ENCODE measurements at regions of chr10 and their contacts with region 1.

Region 1: DNA sequence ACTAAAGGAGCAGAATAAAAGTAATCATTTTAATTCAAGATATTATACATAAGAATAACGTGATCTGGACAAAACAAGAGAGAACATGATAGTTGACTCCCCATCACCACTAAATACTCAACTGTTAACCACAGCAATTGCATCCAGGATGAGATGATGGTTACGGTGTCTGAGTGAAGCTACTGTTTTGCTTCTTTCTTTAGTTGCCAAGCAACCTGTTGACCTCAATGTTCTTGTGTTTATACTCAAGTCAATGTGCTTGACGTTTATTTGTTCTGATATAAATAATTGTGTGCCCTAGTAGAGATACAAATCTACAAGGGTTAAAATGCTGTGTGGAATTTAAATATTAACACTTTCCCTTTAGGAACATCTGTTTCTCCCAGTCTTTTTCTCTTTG is 31.4 kb upstream of the MPP7 start:
- DNase-seq: peak; percentile 61
- H3K4me3 Mint-ChIP-seq: peak overlapping the region; percentile 67
- H3K27ac Mint-ChIP-seq: peak overlapping the region; percentile 96
- H3K4me1 Mint-ChIP-seq: peaks cover 76% of the 10 kb centered on the region
- H3K27me3 Mint-ChIP-seq: no peaks in the 10 kb centered on the region

Region 2: GRCh38 chr10:26977635-26978034 is 1356.7 kb before region 1 on chr10:
- CTCF ChIA-PET with region 1: no interaction called
- intact Hi-C with region 1: no loop called
- DNase-seq: no peak
- H3K4me3 Mint-ChIP-seq: no peak overlapping the region
- H3K27ac Mint-ChIP-seq: no peak overlapping the region
- H3K4me1 Mint-ChIP-seq: no peaks in the 10 kb centered on the region
- H3K27me3 Mint-ChIP-seq: no peaks in the 10 kb centered on the region

Region 3: DNA sequence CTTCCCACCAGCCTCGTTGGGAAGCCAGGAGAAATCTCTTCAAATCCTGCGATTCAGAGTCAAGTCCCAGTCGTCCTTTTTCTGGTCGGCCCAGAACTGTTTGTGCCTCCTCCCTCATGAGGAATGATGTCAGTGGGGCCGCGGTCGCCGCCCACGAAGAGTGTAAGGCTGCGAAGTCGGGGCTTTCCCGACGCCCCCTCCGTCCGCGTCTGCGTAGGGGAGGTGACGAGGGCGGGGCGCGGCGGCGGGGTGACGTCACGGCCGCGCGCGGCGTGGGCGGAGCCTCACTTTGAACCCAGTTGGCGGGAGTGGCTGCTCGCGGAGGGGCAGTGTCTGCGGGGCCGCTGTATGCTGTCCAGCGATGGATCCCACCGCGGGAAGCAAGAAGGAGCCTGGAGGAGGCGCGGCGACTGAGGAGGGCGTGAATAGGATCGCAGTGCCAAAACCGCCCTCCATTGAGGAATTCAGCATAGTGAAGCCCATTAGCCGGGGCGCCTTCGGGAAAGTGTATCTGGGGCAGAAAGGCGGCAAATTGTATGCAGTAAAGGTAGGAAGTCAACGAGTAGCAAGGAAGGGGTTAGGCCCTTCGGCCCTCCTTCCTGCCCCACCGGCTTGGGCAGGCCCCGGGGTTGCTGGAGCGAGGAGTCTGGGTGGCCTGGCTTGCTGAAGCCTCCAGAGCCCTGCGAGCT is 1179.1 kb before region 1 on chr10 and contains the start of gene MASTL:
- CTCF ChIA-PET with region 1: no interaction called
- intact Hi-C with region 1: loop called (anchors 10 kb)
- DNase-seq: peak; percentile 95
- H3K4me3 Mint-ChIP-seq: peak within 1 kb of the TSS; percentile 94
- H3K27ac Mint-ChIP-seq: peak within 1 kb of the TSS; percentile 100
- H3K4me1 Mint-ChIP-seq: peaks cover 46% of the 10 kb centered on the region
- H3K27me3 Mint-ChIP-seq: no peaks in the 10 kb centered on the region
- total RNA-seq, gene MASTL: 50.7 to 51.3 TPM

Region 4: DNA sequence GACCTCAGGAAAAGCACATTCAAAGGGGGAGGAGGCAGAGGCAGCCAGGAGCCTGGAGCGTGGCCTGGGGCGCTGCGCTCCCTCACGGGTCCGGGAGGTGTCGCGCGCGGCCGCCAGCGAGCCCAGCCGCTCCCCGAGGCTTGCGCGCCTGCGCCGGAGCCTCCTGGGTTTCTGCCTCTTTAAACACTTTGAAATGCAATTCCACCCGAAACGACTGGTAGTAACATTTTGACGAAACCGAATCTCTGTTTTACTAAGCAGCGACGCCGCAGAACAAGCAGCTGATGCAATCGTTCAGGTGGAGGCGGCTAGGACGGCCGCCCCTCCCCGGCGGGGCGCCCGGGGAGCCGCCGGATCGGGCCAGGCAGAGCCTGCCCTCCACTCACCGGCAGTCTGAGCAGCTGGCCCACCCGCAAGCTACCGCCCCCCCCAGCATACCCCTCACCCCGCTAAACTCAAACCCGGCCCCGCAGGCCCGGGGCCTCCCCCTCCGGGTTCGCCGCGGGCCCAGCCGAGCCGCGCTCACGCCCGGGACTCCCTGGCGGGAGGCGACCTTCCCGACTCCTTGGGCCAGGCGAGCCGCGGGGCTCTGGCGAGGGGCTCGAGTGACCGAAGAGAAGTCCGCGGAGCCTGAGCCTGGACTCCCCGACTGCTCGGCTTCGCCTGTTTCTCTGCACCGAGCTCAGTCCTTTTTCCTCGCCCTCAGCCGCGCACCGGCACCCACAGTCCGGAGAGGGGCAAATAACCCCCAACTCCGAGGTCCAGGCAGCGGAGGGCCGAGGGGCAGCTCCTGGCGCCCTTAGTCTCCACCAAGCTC is 591.9 kb before region 1 on chr10:
- CTCF ChIA-PET with region 1: no interaction called
- intact Hi-C with region 1: loop called (anchors 1 kb)
- DNase-seq: peak; percentile 88
- H3K4me3 Mint-ChIP-seq: peak overlapping the region; percentile 68
- H3K27ac Mint-ChIP-seq: no peak overlapping the region
- H3K4me1 Mint-ChIP-seq: peaks cover 31% of the 10 kb centered on the region
- H3K27me3 Mint-ChIP-seq: peaks cover 49% of the 10 kb centered on the region

Region 5: GRCh38 chr10:28302638-28303488 is 31.4 kb before region 1 on chr10 and contains the start of gene MPP7:
- CTCF ChIA-PET with region 1: interaction called, 27 read pairs
- intact Hi-C with region 1: loop called (anchors 1 kb)
- DNase-seq: peak; percentile 95
- H3K4me3 Mint-ChIP-seq: peak within 1 kb of the TSS; percentile 82
- H3K27ac Mint-ChIP-seq: peak within 1 kb of the TSS; percentile 77
- H3K4me1 Mint-ChIP-seq: peaks cover 53% of the 10 kb centered on the region
- H3K27me3 Mint-ChIP-seq: no peaks in the 10 kb centered on the region
- total RNA-seq, gene MPP7: 23.6 to 25.4 TPM

Region 6: DNA sequence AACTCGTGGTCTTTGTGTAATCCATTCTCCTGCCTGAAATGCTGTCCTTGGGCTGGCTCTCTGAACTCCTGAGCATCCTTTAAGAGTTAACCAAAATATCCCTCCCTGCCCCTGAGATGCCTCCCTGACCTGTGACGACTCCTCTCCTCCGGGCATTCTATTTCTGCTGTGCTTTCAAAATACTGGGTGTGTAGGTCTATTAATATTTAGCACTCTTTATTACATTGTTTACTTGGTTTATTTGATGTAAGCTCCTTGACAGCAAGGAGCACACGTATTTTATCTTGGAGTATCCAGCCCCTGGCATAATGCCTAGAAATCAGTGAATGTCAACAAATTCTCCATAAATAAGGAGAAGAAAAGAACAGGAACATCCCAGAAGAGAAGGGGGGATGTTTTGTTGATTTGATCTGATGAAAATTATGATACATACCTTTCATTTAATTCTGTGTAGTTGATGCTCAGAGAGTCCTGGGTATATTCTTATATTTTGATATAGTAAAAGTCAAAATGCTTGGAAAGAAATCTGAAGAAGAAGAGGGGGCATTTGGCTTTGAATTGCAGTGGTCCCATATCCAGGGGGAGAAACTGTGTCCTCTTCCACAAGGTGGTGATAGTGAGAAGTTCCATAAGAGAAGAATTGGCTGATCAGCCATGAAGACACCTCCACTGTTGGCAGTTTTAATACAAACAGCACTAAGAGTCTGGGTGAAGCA is 76.3 kb after region 1 on chr10:
- CTCF ChIA-PET with region 1: no interaction called
- intact Hi-C with region 1: loop called (anchors 1 kb)
- DNase-seq: no peak
- H3K4me3 Mint-ChIP-seq: no peak overlapping the region
- H3K27ac Mint-ChIP-seq: no peak overlapping the region
- H3K4me1 Mint-ChIP-seq: peaks cover 11% of the 10 kb centered on the region
- H3K27me3 Mint-ChIP-seq: peaks cover 15% of the 10 kb centered on the region